Transverse colon (tissue), 4 donors: ENCODE measurements at regions of chr11 and their contacts with region 1.

Region 1: GRCh38 chr11:82682003-82682751 is 51.5 kb downstream of the FAM181B start:
- DNase-seq: peak; percentile 16
- H3K4me3 ChIP-seq: no peak overlapping the region
- H3K27ac ChIP-seq: no peak overlapping the region
- H3K4me1 ChIP-seq: peaks cover 0 to 11% (median 5%) of the 10 kb centered on the region in 4 donors
- H3K27me3 ChIP-seq: peaks cover 3% of the 10 kb centered on the region
- CTCF ChIP-seq: peak; percentile 49 to 75 (median 57)
- EP300 ChIP-seq: no peak
- POLR2A ChIP-seq: no peak

Region 2: GRCh38 chr11:82315093-82315492 is 367.1 kb before region 1 on chr11:
- in situ Hi-C with region 1: loop called in 1 of 4 experiments (anchors 25 kb)
- intact Hi-C with region 1: no loop called
- DNase-seq: peak; percentile 11
- H3K4me3 ChIP-seq: no peak overlapping the region
- H3K27ac ChIP-seq: no peak overlapping the region
- H3K4me1 ChIP-seq: no peaks in the 10 kb centered on the region
- H3K27me3 ChIP-seq: no peaks in the 10 kb centered on the region
- CTCF ChIP-seq: peak in 2 of 5 experiments; percentile 15 to 22
- EP300 ChIP-seq: no peak
- POLR2A ChIP-seq: no peak

Region 3: DNA sequence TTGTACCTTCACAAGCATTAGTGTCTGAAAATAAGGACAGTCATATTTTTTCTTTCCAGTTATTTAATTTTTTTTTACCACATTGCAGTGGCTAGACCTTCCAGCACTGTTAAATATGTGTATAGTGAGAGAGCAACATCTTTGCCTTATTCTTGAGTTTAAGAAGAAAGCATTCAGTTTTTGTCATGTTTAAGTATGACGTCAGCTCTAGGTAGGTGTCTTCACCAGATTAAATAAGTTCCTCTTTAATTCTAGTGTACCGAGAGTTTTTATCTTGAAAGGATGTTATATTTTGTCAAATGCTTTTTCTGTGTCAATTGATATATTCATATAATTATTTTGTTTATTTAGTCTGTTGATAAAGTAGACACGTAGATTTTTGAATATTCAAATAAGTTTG is 207.3 kb before region 1 on chr11:
- in situ Hi-C with region 1: no loop called
- intact Hi-C with region 1: no loop called
- DNase-seq: no peak
- H3K4me3 ChIP-seq: no peak overlapping the region
- H3K27ac ChIP-seq: no peak overlapping the region
- H3K4me1 ChIP-seq: no peaks in the 10 kb centered on the region
- H3K27me3 ChIP-seq: no peaks in the 10 kb centered on the region
- CTCF ChIP-seq: no peak
- EP300 ChIP-seq: no peak
- POLR2A ChIP-seq: no peak

Region 4: DNA sequence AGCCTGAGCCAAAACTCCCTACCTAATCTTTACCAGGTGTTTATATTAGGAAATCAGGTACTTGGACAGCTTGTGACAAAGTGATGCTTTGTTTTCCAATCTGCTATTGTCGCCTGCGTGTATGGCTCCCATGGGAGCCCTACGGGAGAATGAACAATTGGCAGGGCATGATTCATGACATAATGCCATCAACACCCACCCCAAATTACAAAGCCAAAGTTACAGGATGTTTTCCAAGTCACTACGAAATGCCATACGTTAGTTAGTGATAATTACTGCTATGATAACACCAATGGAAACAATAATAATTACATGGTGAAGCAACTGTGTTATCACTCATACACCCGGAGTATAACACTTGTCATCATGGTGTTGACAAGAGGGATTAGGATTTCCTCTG is 174.9 kb before region 1 on chr11:
- in situ Hi-C with region 1: no loop called
- intact Hi-C with region 1: no loop called
- DNase-seq: no peak
- H3K4me3 ChIP-seq: no peak overlapping the region
- H3K27ac ChIP-seq: no peak overlapping the region
- H3K4me1 ChIP-seq: no peaks in the 10 kb centered on the region
- H3K27me3 ChIP-seq: no peaks in the 10 kb centered on the region
- CTCF ChIP-seq: no peak
- EP300 ChIP-seq: no peak
- POLR2A ChIP-seq: no peak

Region 5: DNA sequence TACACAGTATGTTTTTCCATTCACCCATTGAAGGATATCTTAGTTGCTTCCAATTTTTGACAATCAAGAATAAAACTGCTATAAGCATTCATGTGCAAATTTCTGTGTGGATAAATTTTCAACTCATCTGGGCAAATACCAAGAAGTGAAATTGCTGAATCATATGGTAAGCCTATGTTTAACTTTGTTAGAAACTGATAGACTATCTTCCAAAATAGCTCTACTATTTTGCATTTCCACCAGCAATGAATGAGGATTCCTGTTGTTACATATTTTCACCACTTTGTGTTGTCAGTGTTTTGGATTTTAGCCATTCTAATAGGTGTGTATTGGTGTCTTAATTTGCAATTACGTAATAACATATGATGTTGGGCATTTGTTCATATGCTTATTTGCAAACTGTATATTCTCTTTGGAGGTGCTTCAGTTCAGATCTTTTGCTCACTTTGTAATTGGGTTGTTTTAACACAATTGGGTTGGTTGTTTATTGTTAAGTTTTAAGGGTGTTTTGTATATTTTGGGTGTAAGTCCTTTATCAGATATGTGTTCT is 100.7 kb after region 1 on chr11:
- in situ Hi-C with region 1: no loop called
- intact Hi-C with region 1: no loop called
- DNase-seq: no peak
- H3K4me3 ChIP-seq: no peak overlapping the region
- H3K27ac ChIP-seq: no peak overlapping the region
- H3K4me1 ChIP-seq: no peaks in the 10 kb centered on the region
- H3K27me3 ChIP-seq: no peaks in the 10 kb centered on the region
- CTCF ChIP-seq: no peak
- EP300 ChIP-seq: no peak
- POLR2A ChIP-seq: no peak